SK-N-SH (cell line): ENCODE measurements at regions of chr15 and their contacts with region 1.

Region 1: GRCh38 chr15:85730001-85730820 is 64.5 kb downstream of the KLHL25 start:
- DNase-seq: peak; percentile 73
- H3K4me3 ChIP-seq: no peak overlapping the region; a peak in 1 of 4 replicates
- H3K27ac ChIP-seq: peak overlapping the region in 1 of 2 experiments; percentile 17; a peak in 1 of 4 replicates
- H3K4me1 ChIP-seq: peaks cover 0 to 2% of the 10 kb centered on the region in 2 experiments; a peak in 1 of 4 replicates
- H3K27me3 ChIP-seq: no peaks in the 10 kb centered on the region
- CTCF ChIP-seq: peak; percentile 75
- EP300 ChIP-seq: no peak
- RAD21 ChIP-seq: peak; percentile 94

Region 2: GRCh38 chr15:85485956-85486567 is 244.1 kb before region 1 on chr15:
- CTCF ChIA-PET with region 1: interaction called, 18 read pairs
- POLR2A ChIA-PET with region 1: no interaction called
- DNase-seq: peak; percentile 61
- H3K4me3 ChIP-seq: no peak overlapping the region; a peak in 1 of 4 replicates
- H3K27ac ChIP-seq: no peak overlapping the region; a peak in 1 of 4 replicates
- H3K4me1 ChIP-seq: peaks cover 8 to 16% of the 10 kb centered on the region in 2 experiments; a peak in 2 of 4 replicates
- H3K27me3 ChIP-seq: no peaks in the 10 kb centered on the region
- CTCF ChIP-seq: peak; percentile 86
- EP300 ChIP-seq: no peak
- RAD21 ChIP-seq: peak; percentile 81

Region 3: DNA sequence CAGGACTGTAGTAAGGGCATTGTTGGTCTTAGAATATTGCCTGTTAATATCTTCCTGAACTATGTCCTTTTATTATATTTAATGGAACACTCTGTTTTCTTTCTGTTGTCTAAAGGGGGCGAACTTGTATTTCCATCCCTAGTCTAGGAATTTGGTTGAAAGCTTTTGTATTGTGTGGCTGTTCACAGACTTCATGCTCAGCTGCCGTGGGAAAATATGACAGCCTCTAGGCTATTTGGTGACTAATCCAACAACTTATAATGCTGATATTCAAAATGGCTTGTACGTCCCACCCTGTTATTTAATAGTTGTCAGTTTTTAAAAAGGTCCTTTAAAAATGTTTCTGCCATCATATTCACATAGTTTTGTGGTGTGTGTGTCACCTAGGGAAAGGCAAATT is 138.1 kb before region 1 on chr15:
- CTCF ChIA-PET with region 1: interaction called, 12 read pairs
- POLR2A ChIA-PET with region 1: no interaction called
- DNase-seq: peak; percentile 34
- H3K4me3 ChIP-seq: no peak overlapping the region
- H3K27ac ChIP-seq: peak overlapping the region; percentile 47 to 82; a peak in 3 of 4 replicates
- H3K4me1 ChIP-seq: peaks cover 0 to 10% of the 10 kb centered on the region in 2 experiments; a peak in 3 of 4 replicates
- H3K27me3 ChIP-seq: no peaks in the 10 kb centered on the region
- CTCF ChIP-seq: peak; percentile 66
- EP300 ChIP-seq: no peak
- RAD21 ChIP-seq: peak; percentile 72

Region 4: DNA sequence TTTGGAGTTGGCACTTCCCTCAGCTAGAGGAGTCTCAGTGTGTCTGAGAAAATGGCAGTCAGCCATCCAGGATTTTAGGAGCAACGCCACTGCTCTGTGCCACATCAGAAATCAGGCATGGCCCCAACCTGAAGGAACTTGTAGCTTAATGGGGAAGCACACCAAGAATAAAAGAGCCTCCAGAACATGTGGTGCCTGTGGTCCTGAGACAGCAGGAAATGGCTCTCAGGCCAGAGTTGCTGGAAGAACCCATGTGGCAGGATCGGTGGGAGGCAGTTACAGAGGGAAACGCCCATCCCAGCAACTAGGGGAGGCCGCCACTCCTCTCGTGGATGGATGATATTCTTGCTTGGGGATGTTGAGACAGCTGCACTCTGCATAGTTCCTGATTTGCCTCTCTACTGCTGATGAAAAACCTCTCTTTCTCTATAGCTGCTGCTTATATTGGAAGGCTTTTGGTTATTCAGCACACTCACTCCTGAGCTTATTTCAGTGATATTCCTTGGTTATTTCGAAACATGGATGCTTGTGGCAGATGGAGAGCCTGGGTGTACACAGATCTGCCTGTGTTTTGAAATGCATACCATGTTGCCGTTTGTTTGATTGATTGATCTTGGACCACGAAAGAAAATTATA is 12.1 kb after region 1 on chr15:
- CTCF ChIA-PET with region 1: interaction called, 13 read pairs
- POLR2A ChIA-PET with region 1: no interaction called
- DNase-seq: peak; percentile 32
- H3K4me3 ChIP-seq: no peak overlapping the region
- H3K27ac ChIP-seq: no peak overlapping the region
- H3K4me1 ChIP-seq: no peaks in the 10 kb centered on the region
- H3K27me3 ChIP-seq: no peaks in the 10 kb centered on the region
- CTCF ChIP-seq: no peak
- EP300 ChIP-seq: no peak
- RAD21 ChIP-seq: no peak